Left lung (tissue), 14 donors: ENCODE measurements at regions of chr15 and their contacts with region 1.

Region 1: DNA sequence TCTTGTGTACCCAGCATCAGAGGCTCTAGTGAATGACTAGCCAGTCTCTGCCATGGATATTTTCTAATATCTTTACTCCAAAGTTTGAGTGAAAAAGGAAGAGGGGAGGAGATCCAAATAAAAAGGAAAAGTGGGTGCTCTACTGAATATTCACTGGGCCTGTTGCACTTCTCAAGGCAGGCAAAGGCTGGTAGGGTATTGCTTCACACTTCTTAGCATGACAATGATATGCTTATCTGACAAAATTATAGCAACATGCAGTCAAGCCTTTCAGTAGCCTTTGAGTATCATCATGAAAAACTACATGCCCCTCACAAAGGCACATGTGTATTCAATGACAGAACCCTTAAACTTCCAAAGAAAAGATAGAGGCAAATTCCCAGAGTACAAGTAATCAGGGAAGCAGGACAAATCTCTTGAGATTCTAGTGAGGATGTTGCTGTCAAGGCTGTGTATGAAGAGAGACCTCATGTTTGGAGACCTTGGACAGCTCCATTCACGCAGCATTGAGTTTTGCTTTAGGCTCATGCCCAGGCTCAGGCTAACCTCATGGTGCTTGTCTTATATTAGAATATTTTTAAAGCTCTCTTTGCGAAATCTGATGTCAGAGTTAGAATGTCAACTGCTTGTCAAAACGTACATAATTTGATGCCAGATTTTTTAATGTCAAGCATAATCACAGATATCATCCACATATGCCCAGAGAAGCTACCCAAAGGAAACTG is 506.9 kb downstream of the OCA2 start:
- DNase-seq: peak in 1 of 4 donors; percentile 50
- ATAC-seq: no peak
- H3K4me3 ChIP-seq: no peak overlapping the region
- H3K27ac ChIP-seq: no peak overlapping the region
- H3K4me1 ChIP-seq: no peaks in the 10 kb centered on the region
- H3K27me3 ChIP-seq: no peaks in the 10 kb centered on the region
- CTCF ChIP-seq: no peak

Region 2: GRCh38 chr15:27648359-27648758 is 56.2 kb after region 1 on chr15:
- intact Hi-C with region 1: loop called in 1 of 2 experiments (anchors 10 kb)
- DNase-seq: no peak
- ATAC-seq: no peak
- H3K4me3 ChIP-seq: no peak overlapping the region
- H3K27ac ChIP-seq: no peak overlapping the region
- H3K4me1 ChIP-seq: no peaks in the 10 kb centered on the region
- H3K27me3 ChIP-seq: no peaks in the 10 kb centered on the region
- CTCF ChIP-seq: no peak

Region 3: DNA sequence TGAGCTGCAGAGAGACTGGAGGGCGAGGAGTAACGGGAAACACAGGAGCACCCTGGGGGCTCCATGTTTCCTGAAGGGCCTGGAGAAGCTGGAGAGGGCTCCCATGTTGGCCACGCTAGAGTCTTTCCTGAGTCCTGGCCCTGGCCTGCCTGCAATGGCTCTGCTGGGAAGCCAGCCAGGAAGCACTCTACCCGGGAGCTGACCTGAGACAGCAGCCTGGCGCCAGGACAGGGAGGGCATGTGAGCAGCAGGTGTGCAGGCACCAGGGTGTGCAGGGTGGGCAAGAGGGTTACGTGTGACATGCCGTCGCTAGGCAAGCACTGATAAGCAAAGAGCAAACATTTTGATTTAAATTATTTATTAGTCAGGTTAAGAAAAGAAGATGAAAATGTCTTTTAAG is 205.6 kb after region 1 on chr15:
- intact Hi-C with region 1: no loop called
- DNase-seq: peak in 1 of 4 donors; percentile 21
- ATAC-seq: peak; percentile 61
- H3K4me3 ChIP-seq: no peak overlapping the region
- H3K27ac ChIP-seq: no peak overlapping the region
- H3K4me1 ChIP-seq: no peaks in the 10 kb centered on the region
- H3K27me3 ChIP-seq: peaks cover 0 to 16% of the 10 kb centered on the region in 2 donors
- CTCF ChIP-seq: no peak